Right lobe of liver (tissue), 6 donors: ENCODE measurements at regions of chr22 and their contacts with region 1.

Region 1: GRCh38 chr22:25475257-25476022 is 89.0 kb upstream of the GRK3 start:
- DNase-seq: no peak
- ATAC-seq: peak in 1 of 4 donors; percentile 26
- H3K4me3 ChIP-seq: no peak overlapping the region
- H3K27ac ChIP-seq: no peak overlapping the region
- H3K4me1 ChIP-seq: no peaks in the 10 kb centered on the region
- H3K27me3 ChIP-seq: no peaks in the 10 kb centered on the region
- CTCF ChIP-seq: no peak
- POLR2A ChIP-seq: no peak

Region 2: GRCh38 chr22:25759825-25760231 is 284.4 kb after region 1 on chr22:
- intact Hi-C with region 1: loop called in 1 of 2 experiments (anchors 10 kb)
- DNase-seq: no peak
- ATAC-seq: peak in 2 of 4 donors; percentile 21 to 86
- H3K4me3 ChIP-seq: no peak overlapping the region
- H3K27ac ChIP-seq: no peak overlapping the region
- H3K4me1 ChIP-seq: no peaks in the 10 kb centered on the region
- H3K27me3 ChIP-seq: no peaks in the 10 kb centered on the region
- CTCF ChIP-seq: no peak
- POLR2A ChIP-seq: no peak